Dendritic cell treated with granulocyte-macrophage colony-stimulating factor and Interleukin-4, amounts not matched to agents 40 ng/mL and 50 ng/mL, for 4 days (primary cell): ENCODE measurements at regions of chr3 and their contacts with region 1.

Region 1: GRCh38 chr3:47420511-47421484 is 40.0 kb downstream of the PTPN23 start:
- H3K4me3 Mint-ChIP-seq: peak overlapping the region; percentile 32
- H3K27ac Mint-ChIP-seq: peak overlapping the region; percentile 89
- H3K4me1 Mint-ChIP-seq: peaks cover 24% of the 10 kb centered on the region
- H3K27me3 Mint-ChIP-seq: no peaks in the 10 kb centered on the region

Region 2: DNA sequence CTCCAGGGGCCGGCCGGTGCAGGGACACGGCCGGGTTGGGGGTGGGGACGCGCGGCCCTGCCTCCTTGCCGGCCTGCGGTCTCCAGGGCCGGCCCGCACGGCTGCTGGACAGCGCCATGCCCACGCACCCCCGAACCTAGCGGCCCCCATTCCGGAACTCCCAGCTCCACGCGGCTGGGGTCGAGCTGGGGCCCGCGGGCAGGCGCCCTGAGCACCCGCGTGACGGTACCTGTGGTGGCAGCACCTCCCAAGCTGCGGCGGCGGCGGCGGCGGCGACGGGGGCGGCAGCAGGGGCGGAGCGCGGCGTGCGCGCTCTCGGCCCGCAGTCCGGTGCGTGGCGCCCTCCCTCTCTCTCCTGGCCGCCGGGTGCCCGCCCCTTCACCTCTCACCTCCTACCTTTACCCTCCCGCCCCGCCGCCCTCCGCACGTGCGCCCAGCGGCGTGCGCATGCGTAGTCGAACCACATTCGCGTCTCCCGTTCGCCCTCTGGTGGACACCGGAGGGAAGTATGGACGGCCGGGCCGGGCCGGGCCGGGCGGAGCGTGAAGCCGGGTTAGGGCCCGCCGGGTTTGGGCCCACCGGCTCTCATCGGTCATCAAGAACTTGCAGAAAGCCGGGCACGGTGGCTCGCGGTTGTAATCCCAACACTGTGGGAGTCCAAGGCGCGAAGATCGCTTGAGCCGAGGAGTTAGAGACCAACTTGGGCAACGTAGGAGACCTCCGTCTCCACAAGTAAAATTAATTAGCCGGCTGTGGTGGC is 55.0 kb after region 1 on chr3 and contains the start of gene SCAP:
- intact Hi-C with region 1: loop called (anchors 1 kb)
- H3K4me3 Mint-ChIP-seq: peak within 1 kb of the TSS; percentile 93
- H3K27ac Mint-ChIP-seq: peak within 1 kb of the TSS; percentile 68
- H3K4me1 Mint-ChIP-seq: peaks cover 23% of the 10 kb centered on the region
- H3K27me3 Mint-ChIP-seq: no peaks in the 10 kb centered on the region

Region 3: DNA sequence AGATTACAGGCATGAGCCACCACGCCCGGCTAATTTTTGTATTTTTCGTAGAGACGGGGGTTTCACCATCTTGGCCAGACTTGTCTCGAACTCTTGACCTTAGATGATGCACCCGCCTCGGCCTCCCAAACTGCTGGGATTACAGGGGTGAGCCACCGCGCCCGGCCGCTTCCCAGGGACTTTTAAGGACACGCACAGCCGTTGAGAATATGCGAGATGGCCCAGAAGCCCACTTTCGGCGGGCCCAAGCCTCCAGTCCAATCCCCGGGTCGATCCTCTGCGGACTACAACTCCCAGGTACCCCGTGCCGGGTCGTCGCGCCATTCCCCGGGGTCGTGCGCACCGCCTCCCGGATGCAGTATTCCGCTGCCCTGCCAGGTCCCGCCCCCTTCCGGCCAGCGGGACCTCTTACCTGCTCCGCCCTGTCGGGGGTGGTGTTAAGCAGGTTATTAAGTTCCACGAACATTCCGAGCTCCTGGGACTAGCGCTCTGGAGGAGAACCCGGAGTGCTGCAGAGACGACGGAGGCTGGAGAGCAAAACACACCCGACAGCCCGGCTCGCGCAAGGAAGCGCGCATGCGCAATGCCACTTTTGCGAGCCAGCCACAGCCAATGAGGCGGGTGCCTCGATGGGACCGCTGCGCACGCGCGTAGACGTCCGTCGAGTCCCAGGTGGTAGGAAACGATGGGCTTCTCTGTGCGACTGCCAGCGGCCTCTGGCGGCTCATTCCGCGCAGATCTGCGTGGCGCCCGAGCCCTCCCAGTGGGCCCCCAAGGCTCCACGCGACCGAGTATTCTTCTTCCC is 92.5 kb after region 1 on chr3 and contains the start of gene ELP6:
- intact Hi-C with region 1: loop called (anchors 1 kb)
- H3K4me3 Mint-ChIP-seq: peak within 1 kb of the TSS; percentile 93
- H3K27ac Mint-ChIP-seq: peak within 1 kb of the TSS; percentile 96
- H3K4me1 Mint-ChIP-seq: peaks cover 24% of the 10 kb centered on the region
- H3K27me3 Mint-ChIP-seq: no peaks in the 10 kb centered on the region